ENCODE measurements at regions of chr9 and their contacts with region 1.

Region 1: GRCh38 chr9:131125128-131126058 is at the start of gene NUP214:
- DNase-seq: peak; percentile 98 to 100 (median 100)

Region 2: DNA sequence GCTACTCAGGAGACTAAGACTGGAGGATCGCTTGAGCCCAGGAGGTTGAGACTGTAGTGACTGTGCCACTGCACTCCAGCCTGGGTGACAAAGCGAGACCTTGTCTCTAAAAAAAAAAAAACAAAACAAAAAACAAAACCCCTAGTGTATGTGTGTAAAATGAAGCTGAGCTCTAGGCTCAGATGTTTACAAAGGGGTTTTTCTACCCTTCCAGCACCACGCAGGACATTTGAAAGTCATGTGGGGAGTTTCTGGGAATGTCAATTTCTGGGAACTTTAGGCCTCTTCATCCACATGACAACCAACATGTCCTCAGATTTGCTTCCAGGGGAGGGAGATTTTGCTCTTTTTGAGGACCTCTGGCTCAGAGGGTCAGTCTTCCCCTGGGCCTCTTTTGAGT is 71.5 kb before region 1 on chr9:
- intact Hi-C with region 1: loop called (anchors 1 kb)
- DNase-seq: peak in 2 of 10 donors; percentile 11 to 26

Measured in posterior cingulate gyrus (tissue), 11 donors.